Calu3 (cell line): ENCODE measurements at regions of chr1 and their contacts with region 1.

Region 1: DNA sequence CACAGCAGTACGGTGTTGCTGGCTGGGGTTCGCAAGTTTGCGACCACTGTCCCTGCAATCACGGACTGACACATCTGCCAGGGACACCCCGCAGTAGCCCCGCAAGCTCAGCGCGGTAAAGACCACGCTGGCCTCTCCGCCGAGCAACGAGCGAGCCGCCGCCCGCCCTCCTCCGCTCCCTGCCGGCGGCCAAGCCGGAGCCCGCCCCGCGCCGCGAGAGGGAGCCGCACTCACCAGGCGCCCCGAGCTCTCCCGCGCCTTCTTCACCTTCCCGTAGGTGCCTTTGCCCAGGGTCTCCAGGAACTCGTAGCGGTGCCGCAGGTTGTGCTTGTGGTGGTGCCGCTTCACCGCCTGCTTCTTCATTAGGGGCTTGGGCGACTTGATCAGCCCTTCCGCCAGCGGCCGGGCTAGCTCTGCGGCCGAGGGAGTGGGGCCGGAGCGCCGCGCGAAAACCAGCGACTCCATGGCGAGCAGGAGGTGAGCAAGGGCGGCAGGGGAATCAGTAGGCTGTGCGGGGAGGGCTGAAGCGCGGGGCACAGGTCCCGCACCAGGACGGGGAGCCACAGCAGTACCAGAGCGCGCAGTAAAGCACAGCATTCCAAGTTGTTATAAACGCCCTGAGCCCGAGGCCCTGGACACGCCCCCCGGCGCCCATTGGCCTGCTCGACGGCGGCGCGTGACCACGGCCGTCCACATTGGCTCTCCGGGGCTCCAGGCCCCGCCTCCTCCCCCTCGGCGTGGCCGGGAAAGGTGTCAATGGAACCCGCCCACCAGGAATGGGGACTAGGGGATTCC is at the start of gene NUAK2:
- DNase-seq: peak; percentile 97
- H3K4me3 Mint-ChIP-seq: peak within 1 kb of the TSS; percentile 85
- H3K27ac Mint-ChIP-seq: peak within 1 kb of the TSS; percentile 6
- H3K4me1 Mint-ChIP-seq: peaks cover 57% of the 10 kb centered on the region
- H3K27me3 Mint-ChIP-seq: peaks cover 13% of the 10 kb centered on the region
- CTCF ChIP-seq: peak; percentile 33
- total RNA-seq, gene NUAK2: 2.6 and 3.7 TPM in 2 replicates

Region 2: DNA sequence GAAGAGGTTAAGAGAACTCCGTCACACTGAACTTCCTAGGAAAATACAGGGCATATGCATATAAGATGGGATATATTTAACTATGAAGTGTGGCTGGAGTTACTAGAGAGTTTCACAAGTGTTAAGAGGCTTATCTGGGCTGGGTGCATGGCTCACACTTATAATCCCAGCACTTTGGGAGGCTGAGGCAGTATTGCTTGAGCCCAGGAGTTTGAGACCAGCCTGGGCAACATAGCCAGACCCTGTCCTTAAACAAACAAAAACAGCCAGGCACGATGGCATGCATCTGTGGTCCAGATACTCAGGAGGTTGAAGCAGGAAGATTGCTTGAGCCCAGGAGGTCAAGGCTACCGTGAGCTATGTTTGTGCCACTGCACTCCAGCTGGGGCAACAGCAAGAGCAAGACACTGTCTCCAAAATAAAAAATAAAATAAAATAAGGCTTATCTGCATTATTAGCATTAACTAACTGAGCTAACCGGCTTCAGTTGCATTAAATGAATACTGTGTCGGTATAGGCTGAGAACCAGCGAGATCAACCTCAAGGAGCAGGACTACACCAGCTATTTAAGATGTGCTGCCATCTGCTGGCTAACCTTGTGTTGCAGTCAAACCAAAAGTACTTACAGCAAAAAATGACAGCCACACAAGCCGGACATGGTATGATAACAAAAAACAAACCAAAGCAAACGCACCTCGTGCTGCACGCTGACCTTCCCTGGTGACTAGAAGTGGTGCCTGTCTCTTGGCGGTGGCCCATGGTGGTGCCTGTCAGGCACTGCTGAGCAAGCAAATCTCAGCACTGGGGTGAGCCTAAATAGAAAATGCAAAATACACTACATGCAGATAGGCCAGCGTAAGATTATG is 179.9 kb before region 1 on chr1:
- CTCF ChIA-PET with region 1: no interaction called
- intact Hi-C with region 1: no loop called
- DNase-seq: peak; percentile 78
- H3K4me3 Mint-ChIP-seq: peak overlapping the region; percentile 25
- H3K27ac Mint-ChIP-seq: no peak overlapping the region
- H3K4me1 Mint-ChIP-seq: no peaks in the 10 kb centered on the region
- H3K27me3 Mint-ChIP-seq: no peaks in the 10 kb centered on the region
- CTCF ChIP-seq: peak; percentile 67

Region 3: DNA sequence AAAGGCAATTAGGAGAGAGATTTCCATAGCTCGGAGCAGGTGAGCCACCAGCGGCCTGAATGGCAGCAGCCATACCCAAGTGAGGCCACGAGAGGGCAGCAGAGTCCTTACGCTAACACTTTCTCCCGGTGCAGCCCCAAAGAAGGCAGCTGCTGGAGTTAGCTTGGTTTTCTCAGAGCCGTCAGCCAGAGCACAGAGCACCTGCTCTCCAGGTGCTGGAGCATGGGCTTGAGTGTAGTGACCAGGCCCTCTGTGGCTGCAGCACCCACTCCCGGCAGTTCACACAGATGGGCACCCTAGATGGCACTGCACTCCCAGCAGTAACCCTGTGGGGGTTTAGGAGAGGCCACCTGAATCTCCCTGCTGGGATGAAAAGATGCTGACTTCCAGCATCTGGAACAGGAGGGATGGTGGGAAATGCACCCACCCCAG is 47.8 kb before region 1 on chr1:
- CTCF ChIA-PET with region 1: interaction called, 303 read pairs
- intact Hi-C with region 1: loop called (anchors 1 kb)
- DNase-seq: peak; percentile 91
- H3K4me3 Mint-ChIP-seq: no peak overlapping the region
- H3K27ac Mint-ChIP-seq: no peak overlapping the region
- H3K4me1 Mint-ChIP-seq: peaks cover 18% of the 10 kb centered on the region
- H3K27me3 Mint-ChIP-seq: peaks cover 42% of the 10 kb centered on the region
- CTCF ChIP-seq: peak; percentile 93

Region 4: GRCh38 chr1:205284343-205285144 is 36.8 kb before region 1 on chr1:
- CTCF ChIA-PET with region 1: interaction called, 12 read pairs
- intact Hi-C with region 1: no loop called
- DNase-seq: peak; percentile 89
- H3K4me3 Mint-ChIP-seq: no peak overlapping the region
- H3K27ac Mint-ChIP-seq: no peak overlapping the region
- H3K4me1 Mint-ChIP-seq: peaks cover 19% of the 10 kb centered on the region
- H3K27me3 Mint-ChIP-seq: no peaks in the 10 kb centered on the region
- CTCF ChIP-seq: no peak

Region 5: GRCh38 chr1:205300886-205301821 is 20.2 kb before region 1 on chr1:
- CTCF ChIA-PET with region 1: interaction called, 13 read pairs
- intact Hi-C with region 1: loop called (anchors 1 kb)
- DNase-seq: peak; percentile 78
- H3K4me3 Mint-ChIP-seq: peak overlapping the region; percentile 46
- H3K27ac Mint-ChIP-seq: peak overlapping the region; percentile 70
- H3K4me1 Mint-ChIP-seq: peaks cover 38% of the 10 kb centered on the region
- H3K27me3 Mint-ChIP-seq: no peaks in the 10 kb centered on the region
- CTCF ChIP-seq: no peak

Region 6: GRCh38 chr1:205335643-205336091 is 14.3 kb after region 1 on chr1:
- CTCF ChIA-PET with region 1: interaction called, 10 read pairs
- intact Hi-C with region 1: no loop called
- DNase-seq: peak; percentile 95
- H3K4me3 Mint-ChIP-seq: no peak overlapping the region
- H3K27ac Mint-ChIP-seq: no peak overlapping the region
- H3K4me1 Mint-ChIP-seq: no peaks in the 10 kb centered on the region
- H3K27me3 Mint-ChIP-seq: peaks cover 69% of the 10 kb centered on the region
- CTCF ChIP-seq: peak; percentile 96

Region 7: GRCh38 chr1:206526064-206526911 is 1204.9 kb after region 1 on chr1:
- CTCF ChIA-PET with region 1: no interaction called
- intact Hi-C with region 1: no loop called
- DNase-seq: no peak
- H3K4me3 Mint-ChIP-seq: no peak overlapping the region
- H3K27ac Mint-ChIP-seq: no peak overlapping the region
- H3K4me1 Mint-ChIP-seq: peaks cover 22% of the 10 kb centered on the region
- H3K27me3 Mint-ChIP-seq: no peaks in the 10 kb centered on the region
- CTCF ChIP-seq: no peak